Endothelial cell of umbilical vein (primary cell): ENCODE measurements at regions of chr7 and their contacts with region 1.

Region 1: GRCh38 chr7:111292026-111292470 is 201.1 kb downstream of the LRRN3 start:
- DNase-seq: no peak
- H3K4me3 ChIP-seq: no peak overlapping the region
- H3K27ac ChIP-seq: no peak overlapping the region
- H3K4me1 ChIP-seq: no peaks in the 10 kb centered on the region
- H3K27me3 ChIP-seq: no peaks in the 10 kb centered on the region
- CTCF ChIP-seq: no peak
- POLR2A ChIP-seq: no peak

Region 2: GRCh38 chr7:111339006-111339405 is 47.0 kb after region 1 on chr7:
- CTCF ChIA-PET with region 1: no interaction called
- POLR2A ChIA-PET with region 1: no interaction called
- dilution Hi-C with region 1: no loop called
- intact Hi-C with region 1: loop called (anchors 5 kb)
- DNase-seq: no peak
- H3K4me3 ChIP-seq: no peak overlapping the region
- H3K27ac ChIP-seq: no peak overlapping the region
- H3K4me1 ChIP-seq: no peaks in the 10 kb centered on the region
- H3K27me3 ChIP-seq: no peaks in the 10 kb centered on the region
- CTCF ChIP-seq: no peak
- POLR2A ChIP-seq: no peak

Region 3: GRCh38 chr7:111532625-111533024 is 240.6 kb after region 1 on chr7:
- CTCF ChIA-PET with region 1: no interaction called
- POLR2A ChIA-PET with region 1: no interaction called
- dilution Hi-C with region 1: no loop called
- intact Hi-C with region 1: no loop called
- DNase-seq: no peak
- H3K4me3 ChIP-seq: no peak overlapping the region
- H3K27ac ChIP-seq: no peak overlapping the region
- H3K4me1 ChIP-seq: peaks cover 16% of the 10 kb centered on the region
- H3K27me3 ChIP-seq: no peaks in the 10 kb centered on the region
- CTCF ChIP-seq: no peak
- POLR2A ChIP-seq: no peak